Mammary epithelial cell (primary cell): ENCODE measurements at regions of chr12 and their contacts with region 1.

Region 1: GRCh38 chr12:75774261-75775052 is 257.1 kb downstream of the PHLDA1 start:
- DNase-seq: no peak
- H3K4me3 ChIP-seq: no peak overlapping the region
- H3K27ac ChIP-seq: no peak overlapping the region
- H3K4me1 ChIP-seq: peaks cover 11% of the 10 kb centered on the region
- H3K27me3 ChIP-seq: no peaks in the 10 kb centered on the region
- CTCF ChIP-seq: no peak

Region 2: DNA sequence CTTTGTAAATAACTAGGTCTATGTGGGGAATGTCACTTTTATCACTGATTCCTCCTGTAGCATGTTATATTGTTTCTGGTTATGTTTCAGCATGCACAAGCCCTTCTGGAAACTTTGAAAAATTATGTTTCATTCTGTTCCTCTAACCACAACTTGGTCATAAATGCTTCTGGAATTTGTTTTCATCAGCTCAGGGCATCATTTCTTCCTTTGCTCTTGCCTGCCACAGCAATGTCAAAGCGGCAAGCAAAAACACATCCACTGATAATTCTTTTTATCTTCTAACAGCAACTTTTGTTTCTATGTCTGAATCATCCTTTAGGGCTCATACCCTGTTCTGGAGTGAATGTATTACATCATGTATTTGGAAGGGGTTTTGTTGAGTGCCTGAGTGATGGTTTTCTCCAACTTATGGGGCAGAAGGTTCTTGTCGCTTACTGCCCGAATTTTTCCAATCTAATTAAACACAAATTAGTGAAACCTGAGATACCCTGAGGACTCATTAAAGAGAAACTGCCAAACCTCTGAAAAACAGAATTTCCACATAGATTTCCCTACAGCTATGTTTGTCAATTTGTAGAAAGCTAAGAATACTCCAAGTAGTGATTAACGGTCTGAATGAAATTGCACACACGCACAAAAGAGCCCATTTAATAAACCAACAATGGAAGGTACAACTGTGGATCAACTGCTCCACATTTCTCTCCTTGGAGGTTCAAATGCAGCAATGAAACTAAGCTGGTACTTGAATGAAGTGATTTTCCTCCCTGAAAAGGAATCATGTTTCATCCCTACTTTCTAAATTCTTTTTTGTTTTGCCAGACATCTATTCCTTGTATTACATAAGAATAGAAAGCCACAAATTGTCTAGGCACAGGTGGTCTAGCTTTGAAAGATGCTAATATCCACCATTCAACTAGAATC is 89.5 kb before region 1 on chr12:
- CTCF ChIA-PET with region 1: no interaction called
- dilution Hi-C with region 1: no loop called
- in situ Hi-C with region 1: no loop called
- intact Hi-C with region 1: loop called (anchors 5 kb)
- DNase-seq: peak; percentile 97
- H3K4me3 ChIP-seq: no peak overlapping the region
- H3K27ac ChIP-seq: peak overlapping the region; percentile 92
- H3K4me1 ChIP-seq: peaks cover 25% of the 10 kb centered on the region
- H3K27me3 ChIP-seq: no peaks in the 10 kb centered on the region
- CTCF ChIP-seq: no peak